ENCODE measurements at regions of chr10 and their contacts with region 1.

Region 1: DNA sequence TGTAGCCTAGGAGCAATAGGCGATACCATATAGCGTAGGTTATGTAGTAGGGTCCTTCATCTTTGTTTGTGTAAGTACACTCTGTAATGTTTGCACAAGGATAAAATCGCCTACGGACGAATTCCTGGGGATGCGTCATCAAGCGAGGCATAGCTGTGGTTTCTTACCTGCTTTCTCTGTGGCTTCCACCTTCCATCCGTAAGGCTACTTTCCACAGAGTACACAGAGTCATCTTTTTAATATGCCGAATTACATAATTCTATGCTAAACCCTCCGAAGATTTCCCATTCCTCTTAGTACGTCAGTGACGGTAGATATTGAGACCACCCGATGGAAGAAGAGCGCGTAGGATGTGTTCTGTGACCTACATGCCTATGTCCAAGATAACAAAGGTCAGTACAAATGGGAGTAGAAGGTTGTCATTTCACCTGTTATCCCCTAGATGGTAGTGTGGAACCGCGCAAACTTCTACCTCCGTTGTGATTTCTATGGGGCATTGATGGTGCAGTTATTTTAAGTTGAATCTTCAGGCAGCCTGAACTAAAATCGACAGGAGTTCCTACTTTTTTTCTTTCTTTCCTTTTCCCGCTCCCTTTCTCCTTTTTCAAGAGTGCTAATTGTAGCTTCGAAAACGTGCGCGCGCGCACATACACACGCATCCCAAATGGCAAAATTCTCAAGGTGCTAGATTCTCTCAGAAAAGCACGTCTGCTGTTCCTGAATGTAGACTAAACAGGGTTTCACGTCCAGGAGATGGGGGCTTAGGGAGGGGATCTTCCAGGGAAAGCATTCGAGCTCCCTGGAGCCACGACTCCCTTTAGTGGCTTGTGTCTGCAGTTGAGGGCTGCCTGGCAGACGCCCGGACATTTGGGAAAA is 111.7 kb upstream of the MBL2 start:
- DNase-seq: peak; percentile 95 to 96
- H3K4me3 ChIP-seq: peak overlapping the region; percentile 37
- H3K4me3 Mint-ChIP-seq: peak overlapping the region; percentile 85
- H3K27ac Mint-ChIP-seq: peak overlapping the region; percentile 92
- H3K4me1 ChIP-seq: peaks cover 11% of the 10 kb centered on the region
- H3K4me1 Mint-ChIP-seq: peaks cover 35% of the 10 kb centered on the region
- H3K27me3 ChIP-seq: no peaks in the 10 kb centered on the region
- H3K27me3 Mint-ChIP-seq: no peaks in the 10 kb centered on the region
- CTCF ChIP-seq: peak; percentile 92 to 97

Region 2: GRCh38 chr10:52682784-52683183 is 201.4 kb before region 1 on chr10:
- CTCF ChIA-PET with region 1: no interaction called
- POLR2A ChIA-PET with region 1: no interaction called
- intact Hi-C with region 1: loop called (anchors 5 kb)
- DNase-seq: peak; percentile 52 to 76
- H3K4me3 ChIP-seq: no peak overlapping the region
- H3K4me3 Mint-ChIP-seq: peak overlapping the region; percentile 6
- H3K27ac Mint-ChIP-seq: no peak overlapping the region
- H3K4me1 ChIP-seq: peaks cover 43% of the 10 kb centered on the region
- H3K4me1 Mint-ChIP-seq: peaks cover 29% of the 10 kb centered on the region
- H3K27me3 ChIP-seq: no peaks in the 10 kb centered on the region
- H3K27me3 Mint-ChIP-seq: no peaks in the 10 kb centered on the region
- CTCF ChIP-seq: no peak

Region 3: DNA sequence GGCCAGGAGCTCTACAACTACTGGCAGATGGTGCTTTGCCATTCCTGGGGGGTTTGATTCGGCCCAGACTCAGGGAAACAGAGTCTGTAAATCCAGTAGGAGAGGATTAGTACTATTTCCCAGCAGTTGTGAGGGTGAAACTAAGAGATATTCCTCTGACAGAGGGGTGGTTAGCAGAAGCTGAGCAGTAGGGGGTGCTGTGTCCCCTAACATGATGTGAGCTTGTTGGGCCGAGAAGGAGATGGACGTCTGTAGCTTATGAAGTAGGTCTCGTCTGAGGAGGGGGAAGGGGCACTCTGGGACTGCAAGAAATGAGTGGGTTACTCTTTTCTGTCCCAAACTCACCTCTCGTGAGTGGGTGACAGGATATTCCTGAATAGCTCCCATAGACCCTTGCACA is 67.6 kb after region 1 on chr10:
- CTCF ChIA-PET with region 1: interaction called, 12 read pairs
- POLR2A ChIA-PET with region 1: no interaction called
- intact Hi-C with region 1: loop called (anchors 1 kb)
- DNase-seq: peak; percentile 83 to 84
- H3K4me3 ChIP-seq: no peak overlapping the region
- H3K4me3 Mint-ChIP-seq: no peak overlapping the region
- H3K27ac Mint-ChIP-seq: peak overlapping the region; percentile 53
- H3K4me1 ChIP-seq: peaks cover 25% of the 10 kb centered on the region
- H3K4me1 Mint-ChIP-seq: peaks cover 25% of the 10 kb centered on the region
- H3K27me3 ChIP-seq: no peaks in the 10 kb centered on the region
- H3K27me3 Mint-ChIP-seq: no peaks in the 10 kb centered on the region
- CTCF ChIP-seq: peak; percentile 71 to 78

Region 4: DNA sequence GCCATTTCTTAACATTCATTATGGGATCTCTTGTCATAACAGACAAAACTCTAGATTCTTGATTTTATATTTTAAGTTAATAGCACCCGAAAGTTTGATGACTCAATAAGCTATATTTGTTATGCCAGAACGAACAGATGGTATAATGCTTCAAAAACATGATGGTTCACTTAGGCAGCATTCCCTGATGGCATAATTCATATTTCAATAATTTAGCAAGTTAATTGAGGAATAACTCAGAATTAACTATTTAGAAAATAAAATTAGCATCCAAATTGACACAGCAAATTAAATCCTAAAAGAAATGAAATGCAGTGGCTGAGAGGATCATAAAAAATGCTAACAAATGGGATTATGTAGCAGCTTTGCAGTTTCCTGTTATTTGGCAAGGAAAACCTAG is 149.2 kb after region 1 on chr10:
- CTCF ChIA-PET with region 1: interaction called, 3 read pairs
- POLR2A ChIA-PET with region 1: interaction called, 6 read pairs
- intact Hi-C with region 1: loop called (anchors 5 kb)
- DNase-seq: no peak
- H3K4me3 ChIP-seq: no peak overlapping the region
- H3K4me3 Mint-ChIP-seq: no peak overlapping the region
- H3K27ac Mint-ChIP-seq: no peak overlapping the region
- H3K4me1 ChIP-seq: peaks cover 31% of the 10 kb centered on the region
- H3K4me1 Mint-ChIP-seq: peaks cover 22% of the 10 kb centered on the region
- H3K27me3 ChIP-seq: no peaks in the 10 kb centered on the region
- H3K27me3 Mint-ChIP-seq: no peaks in the 10 kb centered on the region
- CTCF ChIP-seq: no peak

Region 5: GRCh38 chr10:53453196-53453595 is 569.0 kb after region 1 on chr10:
- CTCF ChIA-PET with region 1: no interaction called
- POLR2A ChIA-PET with region 1: no interaction called
- intact Hi-C with region 1: loop called (anchors 10 kb)
- DNase-seq: peak in 1 of 2 experiments; percentile 20
- H3K4me3 ChIP-seq: no peak overlapping the region
- H3K4me3 Mint-ChIP-seq: no peak overlapping the region
- H3K27ac Mint-ChIP-seq: no peak overlapping the region
- H3K4me1 ChIP-seq: no peaks in the 10 kb centered on the region
- H3K4me1 Mint-ChIP-seq: no peaks in the 10 kb centered on the region
- H3K27me3 ChIP-seq: no peaks in the 10 kb centered on the region
- H3K27me3 Mint-ChIP-seq: no peaks in the 10 kb centered on the region
- CTCF ChIP-seq: peak; percentile 59 to 64

Region 6: DNA sequence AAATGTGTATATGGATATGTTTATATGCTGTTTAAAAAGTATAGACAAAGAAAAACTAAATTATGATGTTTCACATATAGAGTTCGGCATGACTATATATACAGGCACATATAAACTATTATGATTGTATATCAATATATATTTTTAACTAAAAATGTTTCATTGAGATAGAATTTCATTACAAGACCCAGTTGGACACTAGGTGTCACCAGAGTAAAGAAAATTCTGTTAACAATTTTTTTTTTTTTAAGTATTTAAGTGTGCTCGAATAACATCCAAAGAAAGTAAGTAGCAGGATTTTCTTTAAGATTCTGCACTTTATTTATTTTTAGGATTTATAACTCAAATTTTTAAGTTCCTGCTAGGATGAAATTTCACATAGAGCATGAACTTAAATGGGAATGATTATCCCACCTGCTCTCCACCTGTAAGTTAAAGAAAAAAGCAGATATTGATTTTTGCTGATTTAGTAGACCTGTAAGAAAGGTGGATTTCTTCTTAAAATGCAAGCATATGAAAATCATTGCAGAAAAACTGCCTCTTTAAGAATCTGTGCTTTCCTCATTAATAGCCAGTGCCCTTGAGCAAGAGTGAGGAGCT is 955.3 kb after region 1 on chr10:
- CTCF ChIA-PET with region 1: interaction called, 3 read pairs
- POLR2A ChIA-PET with region 1: no interaction called
- intact Hi-C with region 1: loop called (anchors 2 kb)
- DNase-seq: peak in 1 of 2 experiments; percentile 47
- H3K4me3 ChIP-seq: no peak overlapping the region
- H3K4me3 Mint-ChIP-seq: no peak overlapping the region
- H3K27ac Mint-ChIP-seq: no peak overlapping the region
- H3K4me1 ChIP-seq: no peaks in the 10 kb centered on the region
- H3K4me1 Mint-ChIP-seq: no peaks in the 10 kb centered on the region
- H3K27me3 ChIP-seq: no peaks in the 10 kb centered on the region
- H3K27me3 Mint-ChIP-seq: no peaks in the 10 kb centered on the region
- CTCF ChIP-seq: peak; percentile 54 to 65

Region 7: GRCh38 chr10:53997953-53998352 is 1113.7 kb after region 1 on chr10:
- CTCF ChIA-PET with region 1: no interaction called
- POLR2A ChIA-PET with region 1: no interaction called
- intact Hi-C with region 1: loop called (anchors 1 kb)
- DNase-seq: no peak
- H3K4me3 ChIP-seq: no peak overlapping the region
- H3K4me3 Mint-ChIP-seq: no peak overlapping the region
- H3K27ac Mint-ChIP-seq: no peak overlapping the region
- H3K4me1 ChIP-seq: no peaks in the 10 kb centered on the region
- H3K4me1 Mint-ChIP-seq: no peaks in the 10 kb centered on the region
- H3K27me3 ChIP-seq: no peaks in the 10 kb centered on the region
- H3K27me3 Mint-ChIP-seq: no peaks in the 10 kb centered on the region
- CTCF ChIP-seq: peak; percentile 59 to 69

Measured in Caco-2 (cell line).